H1 (cell line): ENCODE measurements at regions of chr11 and their contacts with region 1.

Region 1: DNA sequence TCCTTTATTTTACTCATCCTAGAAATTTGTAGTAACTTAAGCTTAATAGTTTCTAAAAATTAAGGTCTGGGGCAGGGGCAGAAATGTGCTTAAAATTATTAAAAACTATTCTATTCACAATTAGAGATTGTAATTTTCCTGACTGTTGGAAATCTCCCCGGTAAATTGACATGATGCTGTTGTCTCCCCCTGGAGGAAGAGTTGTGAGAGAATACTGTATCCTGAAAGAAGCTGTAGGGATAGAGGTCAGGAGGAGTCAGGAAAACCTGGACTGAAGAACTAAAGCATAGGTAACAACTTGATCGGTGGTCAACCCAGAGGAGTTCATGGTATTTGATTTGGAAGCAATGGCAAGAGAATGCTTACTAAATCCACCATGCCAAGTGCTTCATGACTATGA is 16.2 kb upstream of the ESAM start:
- DNase-seq: no peak
- H3K4me3 ChIP-seq: no peak overlapping the region
- H3K27ac ChIP-seq: no peak overlapping the region
- H3K4me1 ChIP-seq: no peaks in the 10 kb centered on the region
- H3K27me3 ChIP-seq: no peaks in the 10 kb centered on the region
- CTCF ChIP-seq: peak in 2 of 3 experiments; percentile 44 to 63; a peak in 3 of 4 replicates
- EP300 ChIP-seq: no peak
- POLR2A ChIP-seq: no peak
- RAD21 ChIP-seq: peak; percentile 29 to 33; a peak in 3 of 4 replicates

Region 2: GRCh38 chr11:124717786-124718651 is 60.3 kb before region 1 on chr11:
- CTCF ChIA-PET with region 1: no interaction called
- POLR2A ChIA-PET with region 1: no interaction called
- DNase-seq: peak in 1 of 2 experiments; percentile 67
- H3K4me3 ChIP-seq: peak overlapping the region; percentile 32 to 60 (median 54); a peak in 7 of 8 replicates
- H3K27ac ChIP-seq: no peak overlapping the region
- H3K4me1 ChIP-seq: peaks cover 0 to 5% (median 3%) of the 10 kb centered on the region in 4 experiments; a peak in 5 of 7 replicates
- H3K27me3 ChIP-seq: peaks cover 47 to 80% (median 75%) of the 10 kb centered on the region in 4 experiments
- CTCF ChIP-seq: no peak
- EP300 ChIP-seq: no peak
- POLR2A ChIP-seq: no peak
- RAD21 ChIP-seq: no peak

Region 3: GRCh38 chr11:124788521-124788920 is 10.2 kb after region 1 on chr11:
- CTCF ChIA-PET with region 1: interaction called, 53 read pairs
- POLR2A ChIA-PET with region 1: interaction called, 4 read pairs
- DNase-seq: no peak
- H3K4me3 ChIP-seq: no peak overlapping the region
- H3K27ac ChIP-seq: no peak overlapping the region
- H3K4me1 ChIP-seq: peaks cover 3 to 20% (median 7%) of the 10 kb centered on the region in 4 experiments; a peak in 6 of 7 replicates
- H3K27me3 ChIP-seq: no peaks in the 10 kb centered on the region
- CTCF ChIP-seq: no peak
- EP300 ChIP-seq: no peak
- POLR2A ChIP-seq: no peak
- RAD21 ChIP-seq: no peak

Region 4: GRCh38 chr11:124793466-124794278 is 15.4 kb after region 1 on chr11:
- CTCF ChIA-PET with region 1: interaction called, 53 read pairs
- POLR2A ChIA-PET with region 1: interaction called, 13 read pairs
- DNase-seq: no peak
- H3K4me3 ChIP-seq: peak overlapping the region in 1 of 4 experiments; percentile 44; a peak in 1 of 8 replicates
- H3K27ac ChIP-seq: no peak overlapping the region
- H3K4me1 ChIP-seq: peaks cover 3 to 28% (median 7%) of the 10 kb centered on the region in 4 experiments; a peak in 6 of 7 replicates
- H3K27me3 ChIP-seq: no peaks in the 10 kb centered on the region
- CTCF ChIP-seq: peak in 2 of 3 experiments; percentile 43 to 62; a peak in 3 of 4 replicates
- EP300 ChIP-seq: no peak
- POLR2A ChIP-seq: no peak
- RAD21 ChIP-seq: peak; percentile 52 to 54

Region 5: GRCh38 chr11:124800226-124800929 is 22.1 kb after region 1 on chr11 and contains the start of gene MSANTD2:
- CTCF ChIA-PET with region 1: interaction called, 53 read pairs
- POLR2A ChIA-PET with region 1: interaction called, 13 read pairs
- DNase-seq: peak; percentile 29 to 90
- H3K4me3 ChIP-seq: peak within 1 kb of the TSS; percentile 70 to 86 (median 74)
- H3K27ac ChIP-seq: peak within 1 kb of the TSS; percentile 96
- H3K4me1 ChIP-seq: peaks cover 0 to 6% (median under 1%) of the 10 kb centered on the region in 4 experiments; a peak in 3 of 7 replicates
- H3K27me3 ChIP-seq: no peaks in the 10 kb centered on the region
- CTCF ChIP-seq: no peak
- EP300 ChIP-seq: no peak
- POLR2A ChIP-seq: peak; percentile 97 to 98
- RAD21 ChIP-seq: no peak
- total RNA-seq, gene MSANTD2: 15.9 and 17.3 TPM in 2 replicates

Region 6: GRCh38 chr11:124812876-124813275 is 34.6 kb after region 1 on chr11:
- CTCF ChIA-PET with region 1: interaction called, 11 read pairs
- POLR2A ChIA-PET with region 1: no interaction called
- DNase-seq: no peak
- H3K4me3 ChIP-seq: no peak overlapping the region
- H3K27ac ChIP-seq: no peak overlapping the region
- H3K4me1 ChIP-seq: no peaks in the 10 kb centered on the region
- H3K27me3 ChIP-seq: no peaks in the 10 kb centered on the region; a peak in 1 of 7 replicates
- CTCF ChIP-seq: no peak
- EP300 ChIP-seq: no peak
- POLR2A ChIP-seq: no peak
- RAD21 ChIP-seq: no peak